ENCODE measurements at regions of chr18 and their contacts with region 1.

Region 1: GRCh38 chr18:8960740-8961657 is 141.5 kb upstream of the NDUFV2 start:
- DNase-seq: no peak
- H3K4me3 ChIP-seq: no peak overlapping the region
- H3K27ac ChIP-seq: no peak overlapping the region
- H3K27me3 ChIP-seq: no peaks in the 10 kb centered on the region
- CTCF ChIP-seq: no peak

Region 2: DNA sequence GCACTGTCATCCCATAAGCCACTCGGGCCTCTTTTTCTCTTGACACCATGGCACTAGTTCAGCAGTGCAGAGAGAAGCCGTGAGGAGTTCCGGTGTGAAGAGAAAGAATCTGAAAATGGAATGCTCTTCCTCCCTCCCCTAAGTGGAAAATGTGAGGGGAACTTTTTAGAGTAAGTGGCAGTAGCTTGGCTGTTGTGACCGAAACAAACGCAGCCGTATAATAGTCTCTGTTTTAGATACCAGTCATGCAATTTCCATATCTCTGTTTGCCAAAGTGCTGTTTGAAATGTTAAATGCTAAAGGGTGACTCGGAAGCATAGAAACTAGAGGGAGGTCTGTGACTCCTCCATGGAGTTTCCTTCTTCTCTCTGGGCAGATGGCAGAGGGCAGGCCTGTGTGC is 132.7 kb before region 1 on chr18:
- intact Hi-C with region 1: loop called in 1 of 2 experiments (anchors 10 kb)
- DNase-seq: no peak
- H3K4me3 ChIP-seq: no peak overlapping the region
- H3K27ac ChIP-seq: peak overlapping the region in 2 of 59 donors; percentile 14 to 85
- H3K27me3 ChIP-seq: no peaks in the 10 kb centered on the region
- CTCF ChIP-seq: no peak

Measured in dorsolateral prefrontal cortex (tissue), 120 donors.